ENCODE measurements at regions of chr5 and their contacts with region 1.

Region 1: DNA sequence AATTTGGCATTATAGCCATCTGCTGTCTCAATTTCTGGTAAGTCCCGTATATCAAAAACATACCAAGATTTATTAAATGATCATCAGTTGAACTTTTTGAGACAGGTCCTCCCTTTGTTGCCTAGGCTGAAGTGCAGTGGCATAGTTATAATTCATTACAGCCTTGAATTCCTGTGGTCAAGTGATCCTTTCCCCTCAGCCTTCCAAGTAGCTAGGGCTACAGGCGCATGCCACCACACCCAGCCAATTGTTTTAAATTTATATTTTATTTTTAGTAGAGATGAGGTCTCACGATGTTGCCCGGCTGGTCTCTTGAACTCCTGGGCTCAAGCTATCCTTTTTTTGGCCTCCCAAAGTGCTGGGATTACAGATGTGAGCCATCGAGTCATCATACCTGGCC is 418.9 kb downstream of the ARHGEF28 start:
- DNase-seq: no peak
- H3K4me3 Mint-ChIP-seq: no peak overlapping the region
- H3K27ac Mint-ChIP-seq: no peak overlapping the region
- H3K4me1 Mint-ChIP-seq: peaks cover 15% of the 10 kb centered on the region
- H3K27me3 Mint-ChIP-seq: no peaks in the 10 kb centered on the region
- CTCF ChIP-seq: no peak

Region 2: DNA sequence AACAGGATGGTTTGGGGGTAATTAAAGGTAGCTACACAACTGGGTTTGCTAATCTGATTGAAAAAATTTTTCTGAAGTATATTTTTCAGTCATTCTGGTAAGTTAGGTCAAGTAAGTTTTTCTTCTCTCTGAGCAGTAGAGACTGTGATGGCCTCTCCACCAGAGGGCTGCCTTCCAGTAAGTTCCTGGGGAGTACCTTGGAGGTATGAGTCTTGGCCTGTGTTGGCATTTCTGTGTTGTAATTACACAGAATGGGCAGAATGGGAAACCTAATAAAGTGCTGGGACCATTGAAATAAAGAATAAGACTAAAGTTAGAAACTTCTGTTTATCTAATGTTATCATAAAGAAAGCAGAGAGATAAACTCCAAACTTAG is 11.8 kb after region 1 on chr5:
- CTCF ChIA-PET with region 1: interaction called, 32 read pairs
- POLR2A ChIA-PET with region 1: interaction called, 4 read pairs
- intact Hi-C with region 1: no loop called
- DNase-seq: peak; percentile 52
- H3K4me3 Mint-ChIP-seq: no peak overlapping the region
- H3K27ac Mint-ChIP-seq: no peak overlapping the region
- H3K4me1 Mint-ChIP-seq: peaks cover 10% of the 10 kb centered on the region
- H3K27me3 Mint-ChIP-seq: no peaks in the 10 kb centered on the region
- CTCF ChIP-seq: peak; percentile 45